Activated CD8-positive, alpha-beta memory T cell treated with anti-CD3 and anti-CD28 coated beads, Interleukin-2, amount 10 ng/mL, durations not matched to agents 7 days and 5 days (primary cell): ENCODE measurements at regions of chr16 and their contacts with region 1.

Region 1: DNA sequence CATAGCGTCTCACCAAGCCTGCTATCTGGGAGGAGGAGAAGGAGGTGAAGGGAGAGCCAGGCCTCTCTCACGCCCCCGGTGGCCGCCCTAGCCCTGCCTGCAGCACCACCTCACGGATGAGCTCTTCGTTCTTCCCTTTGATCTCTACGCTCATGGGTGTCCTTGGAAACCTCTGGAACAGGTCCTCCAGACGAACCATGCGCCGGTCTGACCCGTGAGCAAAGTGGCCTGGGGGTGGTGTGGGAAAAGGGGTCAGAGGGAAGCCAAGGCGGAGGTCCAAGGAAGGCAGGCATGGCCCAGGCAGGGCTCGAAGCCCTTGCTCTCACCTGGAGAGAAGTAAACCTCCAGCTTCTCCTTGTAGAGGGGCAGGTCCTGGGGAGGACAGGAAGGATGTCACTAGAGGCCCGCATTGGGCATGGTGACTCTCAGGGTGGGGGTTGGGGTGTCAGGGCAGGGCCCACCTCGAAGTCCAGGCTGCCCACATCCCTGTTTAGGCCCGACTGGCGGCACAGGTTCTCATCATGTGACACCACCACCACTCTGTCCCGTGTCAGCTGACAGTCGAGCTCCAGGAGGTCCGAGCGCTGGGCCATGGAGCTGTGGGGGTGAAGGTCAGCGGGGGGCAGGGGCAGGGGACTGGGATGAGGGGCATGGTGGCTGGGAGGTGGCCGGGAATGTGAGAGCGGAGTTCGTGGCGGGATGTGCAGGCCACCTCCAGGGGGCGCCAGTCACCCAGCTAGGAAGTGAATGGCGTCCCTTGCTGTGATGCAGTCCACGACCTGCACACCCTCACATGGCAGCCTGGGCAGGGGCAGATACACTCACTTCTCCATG is 923 bp downstream of the GDPD3 start:
- DNase-seq: peak; percentile 75
- ATAC-seq: peak; percentile 70
- H3K4me3 Mint-ChIP-seq: no peak overlapping the region
- H3K27ac Mint-ChIP-seq: no peak overlapping the region
- H3K4me1 Mint-ChIP-seq: peaks cover 11% of the 10 kb centered on the region
- H3K27me3 Mint-ChIP-seq: no peaks in the 10 kb centered on the region

Region 2: DNA sequence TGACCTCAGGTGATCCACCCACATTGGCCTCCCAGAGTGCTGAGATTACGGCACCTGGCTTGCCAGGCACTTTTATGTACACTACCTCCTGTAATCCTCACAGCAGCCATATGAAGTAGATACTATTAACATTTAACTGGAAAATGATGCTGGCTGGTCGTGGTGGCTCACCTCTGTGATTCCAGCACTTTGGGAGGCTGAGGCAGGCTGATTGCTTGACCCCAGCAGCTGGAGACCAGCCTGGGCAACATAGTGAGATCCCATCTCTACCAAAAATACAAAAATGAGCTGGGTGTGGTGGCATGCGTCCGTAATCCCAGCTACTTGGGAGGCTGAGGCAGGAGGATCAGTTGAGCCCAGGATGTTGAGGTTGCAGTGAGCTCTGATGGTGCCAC is 12.6 kb after region 1 on chr16:
- CTCF ChIA-PET with region 1: interaction called, 18 read pairs
- DNase-seq: no peak
- ATAC-seq: no peak
- H3K4me3 Mint-ChIP-seq: no peak overlapping the region
- H3K27ac Mint-ChIP-seq: peak overlapping the region; percentile 28
- H3K4me1 Mint-ChIP-seq: peaks cover 42% of the 10 kb centered on the region
- H3K27me3 Mint-ChIP-seq: no peaks in the 10 kb centered on the region

Region 3: GRCh38 chr16:30417529-30418349 is 305.3 kb after region 1 on chr16:
- CTCF ChIA-PET with region 1: no interaction called
- DNase-seq: peak; percentile 93
- ATAC-seq: peak; percentile 91
- H3K4me3 Mint-ChIP-seq: peak overlapping the region; percentile 64
- H3K27ac Mint-ChIP-seq: peak overlapping the region; percentile 48
- H3K4me1 Mint-ChIP-seq: peaks cover 31% of the 10 kb centered on the region
- H3K27me3 Mint-ChIP-seq: no peaks in the 10 kb centered on the region